CD4-positive, alpha-beta memory T cell (primary cell): ENCODE measurements at regions of chr16 and their contacts with region 1.

Region 1: DNA sequence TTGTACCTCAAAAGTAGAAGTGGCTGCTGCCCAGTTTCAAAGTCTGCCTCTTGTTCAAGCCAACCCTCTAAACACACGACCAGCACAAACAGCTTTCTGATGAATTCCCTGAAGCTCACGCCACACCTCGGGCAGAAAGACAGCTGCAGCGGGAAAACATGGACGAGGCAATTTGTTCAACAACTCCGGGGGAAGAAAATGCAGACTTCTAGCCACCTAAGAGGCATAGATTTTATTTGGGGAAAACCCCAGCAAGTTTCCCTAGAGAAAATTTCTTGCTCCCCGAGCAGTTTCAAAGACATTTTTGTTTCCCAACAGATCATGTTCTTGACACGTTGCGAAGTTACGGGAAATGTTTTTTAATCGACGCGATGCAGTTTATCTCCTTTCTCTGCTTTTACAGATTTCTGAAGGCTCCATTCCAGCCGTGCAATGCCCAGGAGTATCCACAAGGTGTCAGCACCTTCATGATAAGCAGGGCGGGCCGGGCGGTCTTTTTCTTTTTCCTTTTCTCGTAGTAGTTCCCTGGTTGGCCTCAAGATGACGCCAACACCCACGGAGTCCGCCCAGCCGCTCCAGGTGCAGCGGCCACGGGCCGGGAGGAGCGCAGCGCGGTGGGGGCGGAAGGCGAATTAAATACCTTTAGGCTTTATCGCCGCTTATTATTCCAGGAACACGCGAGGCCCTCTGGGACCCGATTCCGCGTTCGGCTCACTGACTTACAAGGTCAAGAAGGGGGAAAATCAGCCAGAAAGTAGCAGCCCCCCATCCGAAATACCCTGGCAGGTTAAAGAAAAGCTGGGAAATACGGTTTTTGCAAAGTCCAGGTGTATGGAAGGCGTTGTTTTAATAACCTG is 2.9 kb upstream of the FOXC2 start:
- DNase-seq: peak; percentile 80 to 88 (median 83)
- H3K4me3 ChIP-seq: peak overlapping the region; percentile 34 to 52
- H3K4me3 Mint-ChIP-seq: peak overlapping the region; percentile 34 to 80 (median 70)
- H3K27ac ChIP-seq: no peak overlapping the region
- H3K27ac Mint-ChIP-seq: peak overlapping the region in 2 of 7 donors; percentile 29 to 38
- H3K4me1 ChIP-seq: peaks cover 18% of the 10 kb centered on the region
- H3K4me1 Mint-ChIP-seq: peaks cover 10 to 30% (median 22%) of the 10 kb centered on the region in 4 donors
- H3K27me3 ChIP-seq: peaks cover 23% of the 10 kb centered on the region
- H3K27me3 Mint-ChIP-seq: peaks cover 32 to 54% of the 10 kb centered on the region in 2 donors

Region 2: DNA sequence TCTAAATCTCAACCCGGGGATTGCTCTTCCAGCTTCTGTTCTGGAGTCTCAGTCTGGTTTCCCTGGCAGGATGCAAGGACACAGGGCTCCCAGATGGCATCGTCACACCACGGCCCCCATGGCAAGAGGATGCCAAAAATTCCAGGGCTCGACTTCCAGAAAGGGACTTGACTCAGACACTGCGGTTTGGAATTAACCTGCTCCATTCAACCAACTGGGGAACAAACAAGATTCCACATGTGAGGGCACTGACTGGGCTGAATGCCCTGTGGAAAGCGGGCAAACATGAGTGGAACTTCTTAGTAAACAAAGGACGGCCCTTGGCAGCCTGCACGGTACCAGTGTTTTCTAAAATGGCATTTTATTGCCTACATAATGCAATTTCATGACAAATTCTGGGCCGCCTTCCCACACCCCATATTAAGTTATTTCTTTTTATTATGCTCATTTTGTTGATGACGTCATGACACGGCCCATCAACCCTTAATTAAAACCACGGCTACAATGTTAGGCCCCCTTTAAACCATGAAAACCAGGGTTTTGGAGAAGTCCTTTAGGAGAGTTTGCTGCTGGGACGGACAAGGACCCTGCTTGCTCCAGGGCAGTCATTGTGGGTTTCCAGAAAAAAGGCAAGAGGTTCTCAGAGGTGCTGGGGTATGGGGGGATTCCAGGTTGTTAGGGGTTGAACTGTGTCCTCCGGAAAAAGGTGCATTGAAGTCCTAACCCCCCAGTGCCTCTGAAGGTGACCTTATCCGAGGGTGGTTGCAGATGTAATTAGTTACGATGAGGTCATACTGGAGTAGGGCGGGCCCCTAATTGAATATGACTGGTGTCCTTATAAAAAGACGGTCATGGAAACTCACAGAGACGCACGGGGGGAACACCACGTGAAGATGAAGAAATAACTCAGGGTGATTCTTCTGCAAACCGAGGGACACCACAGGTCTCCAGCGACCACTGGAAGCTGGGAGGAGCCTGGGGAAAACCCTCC is 220.2 kb after region 1 on chr16:
- CTCF ChIA-PET with region 1: no interaction called
- POLR2A ChIA-PET with region 1: no interaction called
- intact Hi-C with region 1: no loop called
- DNase-seq: no peak
- H3K4me3 ChIP-seq: no peak overlapping the region
- H3K4me3 Mint-ChIP-seq: no peak overlapping the region
- H3K27ac ChIP-seq: no peak overlapping the region
- H3K27ac Mint-ChIP-seq: no peak overlapping the region
- H3K4me1 ChIP-seq: no peaks in the 10 kb centered on the region
- H3K4me1 Mint-ChIP-seq: no peaks in the 10 kb centered on the region
- H3K27me3 ChIP-seq: no peaks in the 10 kb centered on the region
- H3K27me3 Mint-ChIP-seq: peaks cover 2 to 11% of the 10 kb centered on the region in 2 donors

Region 3: DNA sequence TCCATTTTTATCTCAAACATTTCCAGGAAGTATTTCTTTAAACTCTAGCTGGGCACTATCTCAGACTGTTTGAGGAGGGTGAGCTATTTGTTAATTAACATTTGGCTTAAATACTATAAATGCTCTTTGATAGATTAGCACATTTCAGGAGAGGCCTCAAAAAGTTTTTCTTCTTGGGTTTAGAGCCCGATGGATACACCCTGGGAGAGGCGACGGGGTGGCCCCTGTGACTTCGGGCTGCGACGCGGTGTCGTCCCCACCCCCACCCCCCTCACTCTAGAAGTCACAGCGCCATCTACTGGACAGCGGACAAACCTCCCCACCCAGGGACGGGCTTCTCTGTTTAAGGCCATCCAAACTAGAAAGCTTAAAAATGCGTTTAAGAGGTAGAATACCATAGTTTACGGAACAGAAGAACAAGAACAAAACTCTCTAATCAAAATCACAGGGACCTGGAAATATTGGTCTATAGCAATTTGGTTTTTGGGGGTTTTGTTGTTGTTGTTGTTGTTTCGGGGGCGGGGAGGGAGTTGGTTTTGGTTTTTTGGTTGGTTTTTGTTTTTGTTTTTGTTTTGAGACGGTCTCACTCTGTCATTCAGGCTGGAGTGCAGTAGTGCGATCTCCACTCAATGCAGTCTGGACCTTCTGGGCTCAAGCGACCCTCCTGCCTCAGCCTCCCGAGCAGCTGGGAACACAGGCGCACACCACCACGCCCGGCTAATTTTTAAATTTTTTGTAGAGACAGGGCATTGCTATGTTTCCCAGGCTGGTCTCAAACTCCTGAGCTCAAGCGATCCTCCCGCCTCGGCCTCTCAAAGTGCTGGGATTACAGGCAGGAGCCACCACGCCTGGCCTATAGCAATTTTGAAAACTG is 499.1 kb after region 1 on chr16:
- CTCF ChIA-PET with region 1: interaction called, 7 read pairs
- POLR2A ChIA-PET with region 1: no interaction called
- intact Hi-C with region 1: loop called (anchors 5 kb)
- DNase-seq: peak in 3 of 5 donors; percentile 2 to 9 (median 7)
- H3K4me3 ChIP-seq: no peak overlapping the region
- H3K4me3 Mint-ChIP-seq: no peak overlapping the region
- H3K27ac ChIP-seq: no peak overlapping the region
- H3K27ac Mint-ChIP-seq: no peak overlapping the region
- H3K4me1 ChIP-seq: no peaks in the 10 kb centered on the region
- H3K4me1 Mint-ChIP-seq: no peaks in the 10 kb centered on the region
- H3K27me3 ChIP-seq: peaks cover 4% of the 10 kb centered on the region
- H3K27me3 Mint-ChIP-seq: peaks cover 31% of the 10 kb centered on the region in 2 donors

Region 4: DNA sequence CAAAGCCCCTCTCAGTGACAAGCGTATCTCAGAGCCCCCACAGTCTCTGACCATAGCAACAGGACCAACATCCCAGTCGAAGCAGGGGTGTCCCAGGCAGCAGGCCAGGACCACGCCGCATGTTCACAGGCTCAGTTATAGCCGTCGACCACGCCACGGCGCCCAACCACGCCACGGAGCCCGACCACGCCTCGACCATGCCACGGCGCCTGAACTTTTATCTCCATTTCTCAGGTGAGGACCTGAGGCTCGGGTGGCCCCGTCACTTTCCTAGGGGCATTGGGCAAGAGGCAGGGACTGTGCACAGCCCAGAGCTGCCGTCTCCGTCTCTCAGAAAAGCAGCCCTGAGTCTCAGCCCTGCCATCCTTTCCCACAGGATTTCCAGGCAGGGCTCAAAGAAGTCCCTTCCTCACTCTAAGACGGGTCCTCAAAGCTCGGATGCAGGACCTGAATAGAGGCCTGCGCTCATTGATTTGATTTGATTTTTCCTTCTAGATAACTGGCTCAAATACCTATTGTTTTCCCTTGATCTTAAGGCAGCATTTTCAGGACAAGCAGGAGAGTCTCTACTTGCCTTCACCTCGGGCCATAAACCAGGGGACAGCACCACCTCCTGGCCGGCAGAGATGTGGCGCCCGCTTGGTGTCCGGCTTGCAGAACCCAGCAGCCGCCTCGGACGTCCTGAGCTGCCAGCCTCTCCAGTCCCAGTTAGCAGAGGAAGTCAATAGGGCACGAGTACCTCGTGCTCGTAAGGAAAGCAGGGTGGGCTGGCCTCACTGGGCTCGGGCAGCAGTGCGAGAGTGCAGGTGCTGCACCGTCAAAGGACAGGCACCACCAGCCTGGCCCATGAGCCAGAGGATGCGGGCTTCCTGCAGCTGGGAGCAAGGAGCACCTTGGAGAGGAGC is 714.7 kb after region 1 on chr16:
- CTCF ChIA-PET with region 1: no interaction called
- POLR2A ChIA-PET with region 1: no interaction called
- intact Hi-C with region 1: loop called (anchors 5 kb)
- DNase-seq: peak in 3 of 5 donors; percentile 11 to 13 (median 12)
- H3K4me3 ChIP-seq: no peak overlapping the region
- H3K4me3 Mint-ChIP-seq: no peak overlapping the region
- H3K27ac ChIP-seq: no peak overlapping the region
- H3K27ac Mint-ChIP-seq: no peak overlapping the region
- H3K4me1 ChIP-seq: no peaks in the 10 kb centered on the region
- H3K4me1 Mint-ChIP-seq: peaks cover 0 to 3% (median 1%) of the 10 kb centered on the region in 4 donors
- H3K27me3 ChIP-seq: no peaks in the 10 kb centered on the region
- H3K27me3 Mint-ChIP-seq: peaks cover 0 to 2% of the 10 kb centered on the region in 2 donors

Region 5: DNA sequence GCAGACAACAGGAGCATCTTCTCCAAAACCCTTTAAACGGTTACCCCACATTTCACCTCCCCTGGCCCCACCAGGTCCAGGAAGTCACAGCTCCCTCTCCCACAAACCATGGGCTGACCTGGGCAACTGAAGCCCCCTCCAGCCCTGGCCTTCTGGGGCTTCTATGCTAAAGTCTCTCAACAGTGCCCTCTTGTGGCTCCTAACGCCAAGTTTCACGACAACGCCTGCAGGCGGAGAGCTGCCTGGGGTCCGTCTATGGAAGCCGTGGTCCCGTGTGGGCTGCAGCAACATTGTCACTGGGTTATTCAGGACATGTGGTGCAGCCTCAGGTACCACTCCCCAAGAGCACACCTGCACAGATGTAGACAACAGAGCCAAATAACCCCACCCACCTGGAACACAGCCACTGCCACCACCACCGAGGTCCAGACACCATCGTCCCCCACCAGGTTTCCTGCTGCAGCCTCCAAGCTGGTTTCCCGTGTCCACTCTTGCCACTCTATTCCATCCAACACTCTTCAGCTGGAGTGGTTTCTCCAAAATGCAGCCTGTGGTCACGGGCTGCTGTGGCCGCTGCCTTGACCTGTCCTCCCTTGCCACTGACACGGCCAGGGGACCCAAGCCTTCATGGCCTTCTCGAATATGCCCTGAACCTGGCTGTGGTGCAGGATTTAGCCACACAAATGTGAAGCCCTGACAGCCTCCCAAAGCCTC is 734.4 kb after region 1 on chr16:
- CTCF ChIA-PET with region 1: no interaction called
- POLR2A ChIA-PET with region 1: no interaction called
- intact Hi-C with region 1: loop called (anchors 5 kb)
- DNase-seq: no peak
- H3K4me3 ChIP-seq: no peak overlapping the region
- H3K4me3 Mint-ChIP-seq: no peak overlapping the region
- H3K27ac ChIP-seq: no peak overlapping the region
- H3K27ac Mint-ChIP-seq: peak overlapping the region in 3 of 7 donors; percentile 42 to 87 (median 73)
- H3K4me1 ChIP-seq: peaks cover 3% of the 10 kb centered on the region
- H3K4me1 Mint-ChIP-seq: peaks cover 4 to 9% (median 5%) of the 10 kb centered on the region in 4 donors
- H3K27me3 ChIP-seq: no peaks in the 10 kb centered on the region
- H3K27me3 Mint-ChIP-seq: no peaks in the 10 kb centered on the region